ENCODE measurements at regions of chr16 and their contacts with region 1.

Region 1: GRCh38 chr16:81403616-81404373 is 40.8 kb upstream of the CMIP start:
- DNase-seq: peak; percentile 88
- ATAC-seq: peak; percentile 97
- H3K4me3 Mint-ChIP-seq: peak overlapping the region; percentile 44
- H3K27ac Mint-ChIP-seq: no peak overlapping the region
- H3K4me1 Mint-ChIP-seq: peaks cover 3% of the 10 kb centered on the region
- H3K27me3 Mint-ChIP-seq: peaks cover 13% of the 10 kb centered on the region

Region 2: GRCh38 chr16:81198635-81199034 is 205.2 kb before region 1 on chr16:
- CTCF ChIA-PET with region 1: no interaction called
- DNase-seq: no peak
- ATAC-seq: no peak
- H3K4me3 Mint-ChIP-seq: no peak overlapping the region
- H3K27ac Mint-ChIP-seq: no peak overlapping the region
- H3K4me1 Mint-ChIP-seq: no peaks in the 10 kb centered on the region
- H3K27me3 Mint-ChIP-seq: peaks cover 12% of the 10 kb centered on the region

Region 3: DNA sequence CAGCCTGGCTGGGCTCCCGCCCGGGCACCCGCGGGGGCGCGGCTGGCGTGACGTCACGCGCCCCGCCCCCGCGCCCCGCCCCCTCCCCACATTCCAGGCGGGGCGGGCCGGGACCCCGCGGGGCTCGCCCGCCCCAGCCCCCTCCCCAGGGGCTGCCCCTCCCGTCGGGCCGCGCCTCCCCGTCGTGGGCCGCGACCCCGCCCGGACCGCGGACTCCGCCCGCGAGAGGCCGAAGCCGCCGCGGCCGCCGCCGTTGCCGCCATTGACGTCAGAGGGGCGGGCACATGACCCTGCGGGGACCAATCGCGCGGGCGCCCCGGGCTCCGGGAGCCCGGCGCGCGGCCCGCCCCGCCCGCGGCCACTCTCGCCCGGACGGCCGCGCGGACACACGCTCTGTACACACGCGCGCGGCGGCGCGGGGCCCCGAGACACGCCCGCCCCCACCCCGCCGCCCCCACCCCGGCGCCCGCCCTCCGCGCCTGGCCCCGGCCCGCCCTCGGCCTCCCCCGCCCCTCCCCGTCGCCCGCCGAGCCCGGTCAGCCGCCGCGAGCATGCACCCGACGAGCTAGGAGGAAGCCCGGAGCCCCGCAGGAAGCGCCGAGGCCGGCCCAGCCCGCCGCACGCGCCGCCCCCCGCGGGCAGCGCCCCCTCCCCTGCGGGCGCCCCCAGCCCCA is 40.8 kb after region 1 on chr16 and contains the start of gene CMIP:
- CTCF ChIA-PET with region 1: no interaction called
- DNase-seq: peak; percentile 85
- ATAC-seq: peak; percentile 85
- H3K4me3 Mint-ChIP-seq: peak within 1 kb of the TSS; percentile 91
- H3K27ac Mint-ChIP-seq: peak within 1 kb of the TSS; percentile 84
- H3K4me1 Mint-ChIP-seq: peaks cover 51% of the 10 kb centered on the region
- H3K27me3 Mint-ChIP-seq: peaks cover 26% of the 10 kb centered on the region
- total RNA-seq, gene CMIP: 77.4 to 98.8 TPM

Region 4: DNA sequence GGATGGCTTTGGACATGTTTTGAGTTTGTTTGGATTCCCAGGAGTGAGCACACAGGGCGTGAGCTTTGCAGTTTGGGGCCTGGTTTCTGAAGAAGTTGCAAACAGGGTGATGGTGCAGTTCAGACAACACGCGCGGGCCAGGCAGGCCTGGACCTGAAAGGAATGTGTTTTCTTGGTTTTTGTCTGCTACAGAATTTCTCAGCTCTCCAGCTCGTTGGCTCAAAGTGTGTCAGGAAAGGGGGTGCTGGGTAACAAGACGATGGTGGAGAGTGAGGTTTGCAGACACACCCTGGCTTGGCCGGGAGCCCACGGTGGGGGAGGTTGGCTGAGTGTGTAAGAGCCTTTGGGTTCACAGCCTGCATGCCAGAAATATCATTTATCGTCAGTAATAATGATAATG is 123.1 kb after region 1 on chr16:
- CTCF ChIA-PET with region 1: interaction called, 18 read pairs
- DNase-seq: no peak
- ATAC-seq: no peak
- H3K4me3 Mint-ChIP-seq: peak overlapping the region; percentile 59
- H3K27ac Mint-ChIP-seq: peak overlapping the region; percentile 80
- H3K4me1 Mint-ChIP-seq: peaks cover 85% of the 10 kb centered on the region
- H3K27me3 Mint-ChIP-seq: no peaks in the 10 kb centered on the region

Region 5: DNA sequence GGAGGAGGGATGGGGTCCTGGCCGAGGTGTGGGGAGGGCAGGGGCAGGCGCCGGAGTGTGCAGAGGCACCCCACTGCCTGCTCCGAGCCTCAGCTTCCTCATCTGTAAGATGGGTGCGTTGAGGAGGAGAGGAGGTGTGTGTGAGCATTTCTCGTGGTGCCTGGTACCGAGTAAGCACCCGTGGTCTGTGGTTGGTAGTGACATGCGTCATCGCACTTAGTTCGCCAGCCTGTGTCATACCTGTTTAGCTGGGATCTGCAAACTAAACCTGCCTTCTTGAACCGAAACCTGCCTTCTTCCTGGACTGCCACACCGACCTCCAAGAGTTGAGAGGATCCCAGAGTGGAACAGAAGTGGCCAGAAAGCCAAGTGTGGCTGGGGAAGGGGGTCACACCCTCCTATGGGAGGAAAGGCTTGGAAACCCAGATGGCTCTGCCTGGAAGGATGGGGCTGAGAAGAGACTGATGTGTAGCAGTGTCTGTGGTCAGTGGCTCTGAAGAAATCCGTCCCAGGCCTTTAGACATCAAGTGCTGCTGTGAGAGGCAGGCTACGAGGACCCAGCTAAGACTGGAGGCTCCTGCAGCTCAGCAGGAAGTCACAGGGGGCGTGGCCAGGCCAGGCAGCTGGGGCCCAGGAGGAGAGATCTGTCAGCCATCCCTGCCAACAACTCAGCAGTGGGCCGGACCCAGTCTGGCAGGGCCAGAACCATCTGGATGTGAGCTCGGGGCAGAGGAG is 212.7 kb after region 1 on chr16:
- CTCF ChIA-PET with region 1: interaction called, 13 read pairs
- DNase-seq: peak; percentile 94
- ATAC-seq: peak; percentile 92
- H3K4me3 Mint-ChIP-seq: peak overlapping the region; percentile 54
- H3K27ac Mint-ChIP-seq: no peak overlapping the region
- H3K4me1 Mint-ChIP-seq: peaks cover 18% of the 10 kb centered on the region
- H3K27me3 Mint-ChIP-seq: no peaks in the 10 kb centered on the region

Region 6: DNA sequence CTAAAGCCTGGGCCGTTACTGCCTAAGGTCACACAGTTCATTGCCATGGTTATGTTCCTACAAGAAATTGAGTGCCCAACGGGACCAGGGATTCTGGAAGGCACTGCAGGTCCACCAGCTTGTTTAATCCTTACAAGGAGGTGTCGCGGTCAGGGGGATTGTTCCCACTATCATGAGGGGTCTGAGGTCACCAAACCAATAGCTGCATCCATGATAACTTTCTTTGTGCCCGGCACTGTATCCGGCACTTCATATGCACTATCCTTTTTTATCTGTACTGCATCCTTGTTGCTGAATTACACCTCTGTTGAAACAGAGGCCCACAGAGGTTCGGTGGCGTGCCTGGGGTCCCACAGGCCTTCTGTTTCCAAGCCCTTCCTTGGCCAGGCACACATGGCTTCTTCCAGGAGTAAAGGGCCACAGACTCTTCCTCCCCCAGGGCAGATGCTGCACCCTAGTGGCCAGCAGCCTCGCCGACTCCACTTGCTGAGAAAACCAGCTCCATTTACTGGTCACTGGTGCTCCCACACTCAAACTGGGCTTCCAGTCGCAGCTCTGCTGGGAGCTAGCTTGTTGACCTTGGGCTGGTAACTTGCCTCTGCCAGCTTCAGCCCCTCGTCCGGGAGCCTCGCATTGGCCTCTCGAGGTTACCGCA is 293.3 kb after region 1 on chr16:
- CTCF ChIA-PET with region 1: interaction called, 10 read pairs
- DNase-seq: peak; percentile 65
- ATAC-seq: peak; percentile 45
- H3K4me3 Mint-ChIP-seq: no peak overlapping the region
- H3K27ac Mint-ChIP-seq: no peak overlapping the region
- H3K4me1 Mint-ChIP-seq: peaks cover 3% of the 10 kb centered on the region
- H3K27me3 Mint-ChIP-seq: no peaks in the 10 kb centered on the region

Region 7: GRCh38 chr16:81715358-81716196 is 311.8 kb after region 1 on chr16:
- CTCF ChIA-PET with region 1: interaction called, 19 read pairs
- DNase-seq: peak; percentile 61
- ATAC-seq: peak; percentile 24
- H3K4me3 Mint-ChIP-seq: peak overlapping the region; percentile 62
- H3K27ac Mint-ChIP-seq: peak overlapping the region; percentile 87
- H3K4me1 Mint-ChIP-seq: peaks cover 45% of the 10 kb centered on the region
- H3K27me3 Mint-ChIP-seq: no peaks in the 10 kb centered on the region